HAP-1 (cell line): ENCODE measurements at regions of chr20 and their contacts with region 1.

Region 1: DNA sequence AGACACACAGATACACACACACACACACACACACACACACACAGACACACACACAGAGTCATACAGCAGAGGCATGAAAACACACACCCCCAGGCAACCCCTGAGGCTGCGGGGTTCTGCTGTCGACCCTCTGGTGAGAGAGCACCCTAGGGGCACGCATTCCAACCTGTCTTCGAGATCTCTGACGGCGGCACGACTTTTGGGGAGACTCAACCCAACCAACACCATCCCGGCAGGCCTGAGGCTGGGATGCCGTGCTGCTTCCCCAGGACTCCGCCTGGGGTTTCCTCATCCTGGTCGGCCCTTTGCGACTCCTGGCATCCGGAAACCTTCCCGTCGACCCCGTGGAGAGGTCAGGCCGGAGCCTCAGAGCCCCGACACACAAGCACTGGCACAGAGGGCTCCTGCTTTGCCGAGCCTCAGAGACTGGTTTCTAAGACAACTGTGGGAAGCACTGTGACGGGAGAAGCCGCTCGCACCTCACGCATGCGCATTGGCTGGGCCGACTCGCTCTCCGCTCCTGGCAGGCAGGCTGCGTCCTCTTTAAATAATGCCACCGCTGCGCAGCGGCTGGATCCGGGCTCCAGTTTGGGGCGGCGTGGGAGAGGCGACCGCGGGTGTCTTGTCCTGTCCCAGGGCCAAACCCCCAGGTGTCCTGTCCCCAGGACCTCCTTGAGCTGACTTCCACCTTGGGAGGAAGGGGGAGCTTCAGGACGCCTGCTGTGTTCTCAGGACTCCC is 168.9 kb upstream of the ZNF337 start:
- DNase-seq: peak; percentile 46 to 84
- H3K4me3 ChIP-seq: peak overlapping the region; percentile 16
- H3K4me1 ChIP-seq: peaks cover 4% of the 10 kb centered on the region
- H3K27me3 ChIP-seq: no peaks in the 10 kb centered on the region

Region 2: DNA sequence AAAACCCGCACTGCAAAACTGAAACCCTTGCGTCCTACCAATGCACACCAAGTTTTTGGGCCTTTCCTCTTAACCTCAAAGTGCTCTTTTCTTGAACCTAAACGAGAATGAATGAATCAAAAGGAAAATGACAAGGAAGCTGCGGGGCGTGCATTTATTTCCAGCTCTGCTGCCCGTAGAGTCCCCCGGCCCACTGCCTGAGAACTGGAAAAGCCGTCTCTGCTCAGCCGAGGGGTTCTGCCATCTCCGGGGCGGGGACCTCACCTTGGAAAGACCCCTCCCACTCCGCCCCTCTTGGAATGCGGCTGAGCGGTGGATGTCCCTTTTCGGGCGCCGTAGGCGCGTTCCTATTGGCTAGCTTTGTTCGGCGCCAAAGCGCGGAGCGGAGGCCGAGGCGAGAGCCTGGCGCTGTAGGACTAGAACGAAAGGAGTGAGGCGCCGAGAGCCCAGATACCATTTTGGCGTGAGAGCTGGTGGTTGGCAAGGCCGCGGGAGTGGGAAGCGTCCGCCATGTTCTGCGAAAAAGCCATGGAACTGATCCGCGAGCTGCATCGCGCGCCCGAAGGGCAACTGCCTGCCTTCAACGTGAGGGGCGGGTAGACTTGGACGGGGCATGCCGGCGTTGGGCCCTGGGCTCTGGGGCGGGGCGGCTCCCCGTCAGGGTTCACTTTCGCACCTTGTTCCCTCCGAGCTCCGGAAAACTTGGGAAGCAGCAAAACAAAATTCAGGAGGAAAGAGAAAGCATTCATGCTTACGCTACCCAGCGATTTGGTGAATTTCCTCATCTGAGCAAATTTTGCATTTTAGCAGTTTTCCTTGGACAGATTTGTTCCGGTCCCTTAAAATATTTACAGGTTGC is 458.0 kb before region 1 on chr20 and contains the start of gene GINS1:
- in situ Hi-C with region 1: loop called (anchors 25 kb)
- DNase-seq: peak; percentile 90 to 98
- H3K4me3 ChIP-seq: peak within 1 kb of the TSS; percentile 78
- H3K4me1 ChIP-seq: peaks cover 7% of the 10 kb centered on the region
- H3K27me3 ChIP-seq: no peaks in the 10 kb centered on the region

Region 3: GRCh38 chr20:25470045-25470444 is 395.5 kb before region 1 on chr20:
- in situ Hi-C with region 1: no loop called
- DNase-seq: peak in 1 of 2 experiments; percentile 66
- H3K4me3 ChIP-seq: no peak overlapping the region
- H3K4me1 ChIP-seq: no peaks in the 10 kb centered on the region
- H3K27me3 ChIP-seq: no peaks in the 10 kb centered on the region

Region 4: GRCh38 chr20:25685276-25686080 is 180.1 kb before region 1 on chr20:
- in situ Hi-C with region 1: no loop called
- DNase-seq: no peak
- H3K4me3 ChIP-seq: no peak overlapping the region
- H3K4me1 ChIP-seq: peaks cover 8% of the 10 kb centered on the region
- H3K27me3 ChIP-seq: no peaks in the 10 kb centered on the region

Region 5: DNA sequence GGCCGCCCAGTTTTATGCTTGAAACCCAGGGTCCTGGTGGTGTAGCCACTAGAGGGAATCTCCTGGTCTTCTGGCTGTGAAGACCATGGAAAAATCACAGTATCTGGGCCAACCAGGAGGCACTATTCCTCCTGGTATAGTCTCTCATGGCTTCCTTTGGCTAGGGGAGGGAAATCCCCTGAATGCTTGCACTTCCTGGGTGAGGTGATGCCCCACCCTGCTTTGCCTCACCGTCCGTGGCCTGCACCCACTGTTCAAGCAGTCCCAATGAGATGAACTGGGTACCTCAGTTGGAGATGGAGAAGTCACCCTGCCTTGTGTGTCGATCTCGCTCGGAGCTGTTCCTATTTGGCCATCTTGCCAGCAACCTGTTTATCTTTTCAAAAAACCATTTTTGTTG is 158.8 kb before region 1 on chr20:
- in situ Hi-C with region 1: loop called (anchors 25 kb)
- DNase-seq: no peak
- H3K4me3 ChIP-seq: no peak overlapping the region
- H3K4me1 ChIP-seq: no peaks in the 10 kb centered on the region
- H3K27me3 ChIP-seq: peaks cover 18% of the 10 kb centered on the region; the same call in 1 of the 2 replicates

Region 6: GRCh38 chr20:25761596-25761995 is 104.0 kb before region 1 on chr20:
- in situ Hi-C with region 1: no loop called
- DNase-seq: no peak
- H3K4me3 ChIP-seq: no peak overlapping the region
- H3K4me1 ChIP-seq: no peaks in the 10 kb centered on the region
- H3K27me3 ChIP-seq: no peaks in the 10 kb centered on the region